ENCODE measurements at regions of chr7 and their contacts with region 1.

Region 1: GRCh38 chr7:92621026-92621540 is 30.9 kb upstream of the FAM133B start:
- DNase-seq: peak; percentile 79 to 82
- ATAC-seq: peak; percentile 91
- H3K4me3 ChIP-seq: no peak overlapping the region
- H3K27ac ChIP-seq: peak overlapping the region; percentile 81 to 93
- H3K4me1 ChIP-seq: peaks cover 0 to 3% of the 10 kb centered on the region in 2 donors
- H3K27me3 ChIP-seq: no peaks in the 10 kb centered on the region

Region 2: GRCh38 chr7:91800389-91800788 is 820.7 kb before region 1 on chr7:
- intact Hi-C with region 1: no loop called
- DNase-seq: no peak
- ATAC-seq: peak; percentile 30
- H3K4me3 ChIP-seq: no peak overlapping the region
- H3K27ac ChIP-seq: no peak overlapping the region
- H3K4me1 ChIP-seq: no peaks in the 10 kb centered on the region
- H3K27me3 ChIP-seq: no peaks in the 10 kb centered on the region

Region 3: DNA sequence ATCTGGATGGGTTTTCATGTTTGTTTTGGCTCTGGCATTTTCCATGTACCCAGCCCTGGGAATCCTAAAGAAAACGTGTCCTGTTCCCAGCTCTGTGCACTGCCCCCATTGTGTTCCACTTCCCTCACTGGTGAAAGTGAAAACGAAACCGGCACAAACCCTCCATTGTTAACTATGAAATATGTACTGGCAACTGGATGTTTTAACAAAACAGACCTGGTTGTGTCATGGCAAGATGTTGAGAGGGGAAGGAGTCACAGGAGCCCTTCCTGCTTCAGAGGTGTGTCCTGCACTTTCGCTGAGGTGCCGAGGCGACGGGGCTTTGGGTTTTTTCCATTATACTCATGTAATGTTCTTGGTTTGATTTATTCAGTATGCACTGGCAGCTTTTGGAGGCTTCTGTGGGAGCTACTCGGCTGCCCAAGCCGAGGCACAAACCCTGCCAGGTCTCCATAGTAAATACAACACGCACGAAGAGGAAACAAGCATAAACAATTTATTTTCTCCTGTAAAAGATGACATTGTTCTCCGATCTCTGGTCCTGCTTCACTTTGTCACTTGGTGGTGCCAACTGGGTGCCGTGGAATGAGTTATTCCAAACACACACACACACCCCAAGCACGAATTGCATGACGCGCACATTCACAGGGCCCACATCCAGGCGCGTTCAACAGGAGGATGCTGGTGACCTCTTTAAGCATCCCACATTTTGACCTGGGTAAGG is 97.1 kb after region 1 on chr7:
- intact Hi-C with region 1: loop called in 1 of 2 experiments (anchors 5 kb)
- DNase-seq: peak; percentile 57 to 79
- ATAC-seq: peak; percentile 92
- H3K4me3 ChIP-seq: peak overlapping the region; percentile 56 to 96
- H3K27ac ChIP-seq: peak overlapping the region; percentile 81 to 99
- H3K4me1 ChIP-seq: peaks cover 0 to 4% of the 10 kb centered on the region in 2 donors
- H3K27me3 ChIP-seq: no peaks in the 10 kb centered on the region

Region 4: DNA sequence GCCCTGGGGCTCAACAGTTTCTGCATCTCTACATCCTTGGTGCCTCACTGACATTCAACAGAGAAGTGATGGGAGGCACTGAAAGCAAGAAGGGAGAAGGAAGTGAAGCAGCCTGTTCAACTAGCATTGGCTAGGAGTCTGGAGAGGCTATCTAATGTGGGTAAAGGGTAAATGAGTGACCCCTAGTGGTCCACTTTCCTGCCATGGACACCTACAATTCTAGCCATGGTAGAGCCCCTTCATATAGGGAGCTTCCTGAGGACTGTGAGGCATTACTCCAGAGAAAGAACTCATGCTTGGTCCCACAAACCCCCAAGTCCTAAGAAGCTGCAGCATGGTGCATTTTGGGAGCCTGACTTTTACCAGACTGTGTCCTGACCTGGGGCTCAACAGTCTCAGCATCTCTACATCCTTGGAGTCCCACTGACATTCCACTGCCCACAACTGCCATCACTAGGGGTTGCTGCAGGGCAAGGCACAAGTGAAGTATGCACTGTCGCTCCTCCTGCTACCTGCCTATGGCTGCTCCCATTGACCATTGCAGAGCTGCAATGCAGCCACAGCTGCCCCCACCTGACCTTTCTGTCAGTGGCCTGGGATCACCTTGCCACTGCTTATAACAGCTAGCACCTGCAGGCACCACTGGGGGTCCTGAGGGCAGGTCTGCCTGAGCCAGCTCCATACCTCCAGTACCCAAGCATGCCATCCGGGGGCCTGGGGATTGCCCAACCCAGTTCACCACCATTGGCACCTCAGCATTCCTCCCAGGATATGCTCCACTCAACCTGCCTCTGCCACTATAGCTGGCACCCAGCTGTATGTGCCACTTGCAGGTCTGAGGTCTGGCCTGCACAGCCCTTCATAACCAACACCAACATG is 259.4 kb after region 1 on chr7:
- intact Hi-C with region 1: loop called in 1 of 2 experiments (anchors 5 kb)
- DNase-seq: peak in 1 of 2 donors; percentile 70
- ATAC-seq: no peak
- H3K4me3 ChIP-seq: no peak overlapping the region
- H3K27ac ChIP-seq: no peak overlapping the region
- H3K4me1 ChIP-seq: no peaks in the 10 kb centered on the region
- H3K27me3 ChIP-seq: no peaks in the 10 kb centered on the region

Region 5: GRCh38 chr7:93055543-93056107 is 434.5 kb after region 1 on chr7:
- intact Hi-C with region 1: loop called in 1 of 2 experiments (anchors 5 kb)
- DNase-seq: no peak
- ATAC-seq: peak; percentile 73
- H3K4me3 ChIP-seq: no peak overlapping the region
- H3K27ac ChIP-seq: no peak overlapping the region
- H3K4me1 ChIP-seq: no peaks in the 10 kb centered on the region
- H3K27me3 ChIP-seq: no peaks in the 10 kb centered on the region